MCF 10A (cell line): ENCODE measurements at regions of chr4 and their contacts with region 1.

Region 1: DNA sequence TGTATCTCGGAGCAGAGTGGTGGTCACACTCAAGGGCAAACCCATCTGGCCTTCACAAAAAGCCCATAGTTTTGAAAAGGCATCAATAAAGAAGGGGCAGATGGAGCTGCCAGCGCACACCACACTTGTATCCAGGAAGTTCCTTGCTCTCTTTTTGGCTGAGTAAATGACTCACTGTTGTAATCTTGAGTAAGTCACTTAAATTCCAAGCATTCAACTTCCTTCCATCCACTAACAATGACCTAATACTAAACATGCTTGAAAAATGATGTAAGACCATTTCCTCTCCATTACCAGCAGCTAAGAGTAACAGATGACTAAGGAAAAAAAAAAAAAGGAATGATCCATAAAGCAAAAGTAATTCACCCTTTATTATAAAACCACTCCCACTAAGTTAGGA is 32.4 kb upstream of the MYOZ2 start:
- DNase-seq: peak; percentile 93
- H3K4me3 Mint-ChIP-seq: peak overlapping the region; percentile 43
- H3K27ac Mint-ChIP-seq: peak overlapping the region; percentile 89
- H3K4me1 Mint-ChIP-seq: peaks cover 35% of the 10 kb centered on the region
- H3K27me3 Mint-ChIP-seq: no peaks in the 10 kb centered on the region
- CTCF ChIP-seq: no peak

Region 2: DNA sequence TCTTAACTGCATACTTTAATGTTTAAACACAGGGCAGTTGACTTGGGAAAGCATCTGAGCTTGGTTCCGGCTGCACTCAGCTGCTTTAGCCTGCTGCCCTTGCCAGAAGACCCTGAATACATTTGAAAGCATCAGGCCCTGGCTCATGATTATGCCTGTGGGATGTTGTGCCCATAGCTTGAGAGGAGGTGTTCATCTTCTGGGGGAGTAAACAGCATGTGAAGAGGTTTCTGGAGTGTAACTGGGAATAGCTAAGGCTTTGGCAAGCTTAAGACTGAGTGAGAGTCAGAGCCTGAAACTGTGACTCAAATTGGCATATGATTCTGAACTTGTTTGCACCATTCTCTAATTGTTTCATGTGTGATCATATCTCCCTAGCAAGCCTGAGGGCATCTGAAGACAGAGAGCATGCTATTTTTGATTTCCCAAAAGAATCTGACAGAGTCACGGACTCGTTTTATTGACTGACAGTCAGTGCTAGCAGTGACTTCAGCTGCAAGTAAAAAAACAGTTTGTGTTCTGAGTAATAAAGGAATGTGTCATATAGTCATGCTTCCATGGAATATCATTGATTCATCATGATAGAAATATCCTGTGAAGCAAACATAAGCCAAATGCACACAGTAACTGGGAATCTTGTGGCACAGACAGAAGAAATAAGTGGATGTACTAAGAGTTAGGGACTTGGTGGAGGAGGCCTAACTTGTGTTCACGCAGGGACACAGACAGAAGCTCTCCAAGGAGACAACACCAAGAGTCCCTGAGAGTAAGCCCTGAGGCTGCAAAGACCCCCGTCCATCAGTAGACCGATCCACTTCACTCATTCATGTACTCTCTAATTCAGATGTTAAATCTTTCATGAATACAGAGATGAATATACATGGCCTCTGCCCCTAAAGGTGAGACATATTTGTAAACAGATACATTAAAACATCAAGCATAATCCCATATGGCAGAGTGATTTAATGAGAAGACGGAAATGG is 113.9 kb before region 1 on chr4:
- CTCF ChIA-PET with region 1: no interaction called
- POLR2A ChIA-PET with region 1: interaction called, 22 read pairs
- intact Hi-C with region 1: loop called (anchors 10 kb)
- DNase-seq: peak; percentile 91
- H3K4me3 Mint-ChIP-seq: peak overlapping the region; percentile 23
- H3K27ac Mint-ChIP-seq: peak overlapping the region; percentile 96
- H3K4me1 Mint-ChIP-seq: peaks cover 25% of the 10 kb centered on the region
- H3K27me3 Mint-ChIP-seq: no peaks in the 10 kb centered on the region
- CTCF ChIP-seq: no peak

Region 3: GRCh38 chr4:119025916-119026661 is 77.2 kb before region 1 on chr4:
- CTCF ChIA-PET with region 1: no interaction called
- POLR2A ChIA-PET with region 1: interaction called, 19 read pairs
- intact Hi-C with region 1: no loop called
- DNase-seq: peak; percentile 88
- H3K4me3 Mint-ChIP-seq: peak overlapping the region; percentile 62
- H3K27ac Mint-ChIP-seq: peak overlapping the region; percentile 95
- H3K4me1 Mint-ChIP-seq: peaks cover 10% of the 10 kb centered on the region
- H3K27me3 Mint-ChIP-seq: no peaks in the 10 kb centered on the region
- CTCF ChIP-seq: peak; percentile 6

Region 4: GRCh38 chr4:119068529-119068962 is 34.7 kb before region 1 on chr4:
- CTCF ChIA-PET with region 1: interaction called, 4 read pairs
- POLR2A ChIA-PET with region 1: interaction called, 21 read pairs
- intact Hi-C with region 1: no loop called
- DNase-seq: peak; percentile 63
- H3K4me3 Mint-ChIP-seq: no peak overlapping the region
- H3K27ac Mint-ChIP-seq: peak overlapping the region; percentile 72
- H3K4me1 Mint-ChIP-seq: peaks cover 25% of the 10 kb centered on the region
- H3K27me3 Mint-ChIP-seq: no peaks in the 10 kb centered on the region
- CTCF ChIP-seq: no peak

Region 5: GRCh38 chr4:119087121-119087520 is 16.1 kb before region 1 on chr4:
- CTCF ChIA-PET with region 1: interaction called, 27 read pairs
- POLR2A ChIA-PET with region 1: interaction called, 4 read pairs
- intact Hi-C with region 1: no loop called
- DNase-seq: no peak
- H3K4me3 Mint-ChIP-seq: no peak overlapping the region
- H3K27ac Mint-ChIP-seq: no peak overlapping the region
- H3K4me1 Mint-ChIP-seq: no peaks in the 10 kb centered on the region
- H3K27me3 Mint-ChIP-seq: no peaks in the 10 kb centered on the region
- CTCF ChIP-seq: no peak

Region 6: GRCh38 chr4:119162174-119162573 is 58.9 kb after region 1 on chr4:
- CTCF ChIA-PET with region 1: no interaction called
- POLR2A ChIA-PET with region 1: no interaction called
- intact Hi-C with region 1: no loop called
- DNase-seq: no peak
- H3K4me3 Mint-ChIP-seq: no peak overlapping the region
- H3K27ac Mint-ChIP-seq: no peak overlapping the region
- H3K4me1 Mint-ChIP-seq: no peaks in the 10 kb centered on the region
- H3K27me3 Mint-ChIP-seq: no peaks in the 10 kb centered on the region
- CTCF ChIP-seq: no peak

Region 7: GRCh38 chr4:119841361-119841760 is 738.1 kb after region 1 on chr4:
- CTCF ChIA-PET with region 1: no interaction called
- POLR2A ChIA-PET with region 1: no interaction called
- intact Hi-C with region 1: no loop called
- DNase-seq: no peak
- H3K4me3 Mint-ChIP-seq: no peak overlapping the region
- H3K27ac Mint-ChIP-seq: no peak overlapping the region
- H3K4me1 Mint-ChIP-seq: no peaks in the 10 kb centered on the region
- H3K27me3 Mint-ChIP-seq: no peaks in the 10 kb centered on the region
- CTCF ChIP-seq: no peak